Heart right ventricle (tissue), 16 donors: ENCODE measurements at regions of chr1 and their contacts with region 1.

Region 1: DNA sequence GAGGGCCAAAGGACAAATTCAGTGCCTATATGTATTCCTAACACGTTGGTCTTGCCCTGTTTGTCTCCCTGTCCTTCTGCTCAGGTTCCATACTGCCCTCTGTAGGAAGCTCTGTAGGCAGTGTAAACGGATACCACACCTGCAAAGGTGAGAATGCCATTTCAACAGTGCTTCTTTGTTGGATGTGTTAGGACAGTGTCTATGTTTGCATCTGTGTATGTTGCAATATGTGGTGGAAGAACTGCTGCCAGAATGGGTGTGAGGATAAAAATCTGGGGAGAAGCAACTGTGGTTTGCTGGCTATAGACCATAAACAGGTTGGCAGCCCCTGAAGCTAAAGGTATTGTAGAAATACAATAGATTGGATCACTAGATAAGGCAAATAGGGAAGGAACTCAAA is 113.1 kb upstream of the BMP8A start:
- DNase-seq: no peak
- ATAC-seq: no peak
- H3K4me3 ChIP-seq: no peak overlapping the region
- H3K27ac ChIP-seq: no peak overlapping the region
- H3K4me1 ChIP-seq: peaks cover 0 to 10% (median 7%) of the 10 kb centered on the region in 9 donors
- H3K27me3 ChIP-seq: no peaks in the 10 kb centered on the region
- CTCF ChIP-seq: peak in 5 of 9 donors; percentile 24 to 35 (median 35)

Region 2: DNA sequence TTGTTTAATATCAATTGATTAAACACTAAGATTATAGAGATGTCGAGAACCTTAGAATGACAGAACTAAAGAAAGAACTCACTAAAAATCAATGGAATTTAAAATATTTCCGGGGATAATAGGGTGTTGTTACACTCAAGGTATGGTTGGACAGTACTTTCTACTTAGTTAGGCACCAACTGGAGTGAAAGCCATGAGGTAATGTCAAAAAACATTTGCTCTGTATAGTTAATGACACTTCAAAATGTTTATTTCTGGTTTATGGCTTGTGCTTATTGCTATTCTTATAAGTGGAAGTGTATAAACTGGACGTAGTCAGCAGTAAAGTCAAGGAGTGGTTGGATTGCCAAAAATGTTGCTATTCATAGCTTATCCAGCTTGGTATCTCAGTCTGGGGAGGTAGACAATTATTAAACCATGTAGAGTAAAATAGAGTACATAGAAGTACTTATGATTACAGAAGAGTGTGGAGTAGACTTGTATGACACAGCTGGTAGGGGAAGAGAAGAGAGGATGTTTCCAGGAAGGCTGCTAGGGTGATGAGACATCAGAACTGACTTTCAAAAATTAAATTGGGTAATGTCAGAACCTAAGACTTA is 56.5 kb after region 1 on chr1:
- intact Hi-C with region 1: loop called in 1 of 10 experiments (anchors 10 kb)
- DNase-seq: no peak
- ATAC-seq: peak; percentile 51 to 96 (median 88)
- H3K4me3 ChIP-seq: no peak overlapping the region
- H3K27ac ChIP-seq: peak overlapping the region in 5 of 10 donors; percentile 1 to 13 (median 9)
- H3K4me1 ChIP-seq: peaks cover 0 to 32% (median 7%) of the 10 kb centered on the region in 9 donors
- H3K27me3 ChIP-seq: no peaks in the 10 kb centered on the region
- CTCF ChIP-seq: no peak